ENCODE measurements at regions of chr11 and their contacts with region 1.

Region 1: GRCh38 chr11:63845303-63845702 is 6.4 kb downstream of the MARK2 start:
- DNase-seq: peak; percentile 91
- ATAC-seq: peak; percentile 83
- H3K4me3 ChIP-seq: no peak overlapping the region
- H3K27ac ChIP-seq: peak overlapping the region; percentile 15; the same call in 1 of the 2 replicates
- H3K4me1 ChIP-seq: peaks cover 15% of the 10 kb centered on the region
- H3K27me3 ChIP-seq: no peaks in the 10 kb centered on the region
- CTCF ChIP-seq: no peak
- POLR2A ChIP-seq: no peak
- RAD21 ChIP-seq: peak; percentile 13; the same call in 1 of the 2 replicates

Region 2: GRCh38 chr11:63478896-63479295 is 366.4 kb before region 1 on chr11:
- CTCF ChIA-PET with region 1: no interaction called
- POLR2A ChIA-PET with region 1: no interaction called
- dilution Hi-C with region 1: no loop called
- in situ Hi-C with region 1: no loop called
- intact Hi-C with region 1: no loop called
- DNase-seq: peak; percentile 75
- ATAC-seq: peak; percentile 97
- H3K4me3 ChIP-seq: no peak overlapping the region
- H3K27ac ChIP-seq: no peak overlapping the region
- H3K4me1 ChIP-seq: no peaks in the 10 kb centered on the region
- H3K27me3 ChIP-seq: peaks cover 3% of the 10 kb centered on the region
- CTCF ChIP-seq: peak; percentile 95
- POLR2A ChIP-seq: peak; percentile 58; the same call in 1 of the 2 replicates
- RAD21 ChIP-seq: peak; percentile 98

Region 3: GRCh38 chr11:63871962-63872799 is 26.9 kb after region 1 on chr11:
- CTCF ChIA-PET with region 1: interaction called, 3 read pairs
- POLR2A ChIA-PET with region 1: interaction called, 3 read pairs
- dilution Hi-C with region 1: no loop called
- in situ Hi-C with region 1: no loop called
- intact Hi-C with region 1: loop called (anchors 1 kb)
- DNase-seq: peak; percentile 93
- ATAC-seq: peak; percentile 96
- H3K4me3 ChIP-seq: no peak overlapping the region
- H3K27ac ChIP-seq: no peak overlapping the region
- H3K4me1 ChIP-seq: peaks cover 14% of the 10 kb centered on the region; the same call in 1 of the 2 replicates
- H3K27me3 ChIP-seq: no peaks in the 10 kb centered on the region
- CTCF ChIP-seq: peak; percentile 57
- POLR2A ChIP-seq: no peak
- RAD21 ChIP-seq: peak; percentile 62

Measured in IMR-90 (cell line).